ENCODE measurements at regions of chr10 and their contacts with region 1.

Region 1: GRCh38 chr10:68096913-68097503 is 12.3 kb upstream of the MYPN start:
- DNase-seq: peak; percentile 80 to 95
- H3K4me3 ChIP-seq: peak overlapping the region; percentile 2; the same call in 1 of the 2 replicates
- H3K27ac ChIP-seq: peak overlapping the region; percentile 100
- H3K4me1 ChIP-seq: peaks cover 73% of the 10 kb centered on the region
- H3K27me3 ChIP-seq: no peaks in the 10 kb centered on the region
- CTCF ChIP-seq: no peak

Region 2: DNA sequence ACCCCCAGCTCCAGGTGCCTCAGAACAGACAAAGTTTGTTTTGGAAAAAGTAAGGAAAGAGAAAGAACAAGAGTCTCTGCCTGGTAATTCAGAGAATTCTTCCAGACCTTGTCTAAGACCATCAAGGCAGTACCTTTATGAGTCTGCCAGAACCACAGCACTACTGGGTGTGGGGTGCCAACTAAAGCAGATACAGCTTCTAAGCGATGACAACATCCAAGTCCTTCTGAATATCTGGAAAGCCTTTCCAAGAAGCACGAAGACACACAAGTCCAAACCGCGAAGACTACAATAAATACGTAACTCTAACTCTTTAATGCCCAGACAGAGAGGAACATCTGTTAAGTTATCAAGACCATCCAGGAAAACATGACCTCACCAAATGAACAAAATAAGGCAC is 118.3 kb before region 1 on chr10:
- CTCF ChIA-PET with region 1: no interaction called
- POLR2A ChIA-PET with region 1: no interaction called
- intact Hi-C with region 1: no loop called
- DNase-seq: no peak
- H3K4me3 ChIP-seq: no peak overlapping the region
- H3K27ac ChIP-seq: no peak overlapping the region
- H3K4me1 ChIP-seq: peaks cover 20% of the 10 kb centered on the region; the same call in 1 of the 2 replicates
- H3K27me3 ChIP-seq: no peaks in the 10 kb centered on the region
- CTCF ChIP-seq: no peak

Region 3: DNA sequence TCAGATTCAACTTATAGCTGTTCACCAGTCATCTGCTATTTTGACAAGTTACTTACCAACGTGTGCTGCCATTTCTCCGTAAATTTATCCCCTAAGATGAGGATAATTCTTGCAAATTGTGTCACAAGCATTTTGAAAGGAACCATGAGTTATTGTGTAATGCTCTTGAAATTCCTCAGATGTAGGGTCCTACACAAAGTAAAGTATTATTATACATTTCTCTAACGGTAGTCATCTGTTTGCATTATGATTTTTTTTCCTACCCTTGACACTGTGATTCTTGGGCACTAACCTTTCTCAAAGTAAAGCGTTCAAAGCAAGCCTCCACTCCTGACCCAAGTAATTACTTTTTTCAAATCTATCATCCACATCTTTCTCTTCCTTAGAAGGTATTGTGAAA is 30.0 kb before region 1 on chr10:
- CTCF ChIA-PET with region 1: interaction called, 3 read pairs
- POLR2A ChIA-PET with region 1: interaction called, 17 read pairs
- intact Hi-C with region 1: no loop called
- DNase-seq: no peak
- H3K4me3 ChIP-seq: no peak overlapping the region
- H3K27ac ChIP-seq: 0 out of 2 replicates have a peak overlapping the region, but pooled peaks have one; percentile 10
- H3K4me1 ChIP-seq: peaks cover 30% of the 10 kb centered on the region
- H3K27me3 ChIP-seq: no peaks in the 10 kb centered on the region
- CTCF ChIP-seq: no peak

Region 4: GRCh38 chr10:68082872-68083271 is 14.1 kb before region 1 on chr10:
- CTCF ChIA-PET with region 1: interaction called, 10 read pairs
- POLR2A ChIA-PET with region 1: interaction called, 20 read pairs
- intact Hi-C with region 1: no loop called
- DNase-seq: no peak
- H3K4me3 ChIP-seq: no peak overlapping the region
- H3K27ac ChIP-seq: peak overlapping the region; percentile 10; the same call in 1 of the 2 replicates
- H3K4me1 ChIP-seq: peaks cover 53% of the 10 kb centered on the region
- H3K27me3 ChIP-seq: no peaks in the 10 kb centered on the region
- CTCF ChIP-seq: peak; percentile 80

Region 5: DNA sequence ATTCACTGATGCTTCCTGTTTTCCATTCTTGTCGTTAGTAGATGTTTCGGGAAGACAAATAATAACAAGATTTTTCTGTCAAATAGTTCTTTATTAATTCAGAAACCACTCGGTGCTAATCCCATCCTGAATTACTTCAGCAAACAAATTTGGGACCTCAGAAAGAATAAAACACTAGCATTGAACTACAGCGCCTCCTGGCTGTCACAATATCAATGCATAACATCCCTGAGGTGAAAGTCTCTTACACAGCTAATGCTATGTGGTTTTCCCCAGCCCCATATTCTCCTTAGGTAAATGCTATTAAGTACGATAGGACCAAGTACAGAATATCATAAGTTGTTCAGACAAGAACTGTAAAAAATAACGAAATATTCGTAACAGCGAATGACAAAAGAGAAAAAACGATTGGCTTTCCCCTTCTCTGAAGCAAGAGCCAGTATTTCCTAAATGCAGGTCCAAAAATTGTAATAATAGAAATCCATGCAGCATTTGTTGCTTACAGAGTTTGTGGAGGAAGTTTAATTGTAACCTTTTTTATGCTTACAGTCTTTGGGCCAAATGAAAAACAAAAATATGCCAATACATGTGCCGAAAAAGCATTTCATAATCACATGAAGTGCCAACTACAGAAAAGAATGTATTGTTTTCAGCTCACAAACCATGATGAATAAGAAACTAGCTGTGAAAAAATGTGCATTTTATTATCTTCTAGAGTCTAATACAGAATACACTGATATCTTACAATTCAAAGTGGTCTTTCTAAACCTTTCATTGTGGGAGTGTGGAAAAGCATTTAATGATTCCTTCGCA is 59.6 kb after region 1 on chr10:
- CTCF ChIA-PET with region 1: interaction called, 3 read pairs
- POLR2A ChIA-PET with region 1: interaction called, 15 read pairs
- intact Hi-C with region 1: loop called (anchors 1 kb)
- DNase-seq: peak; percentile 36 to 40
- H3K4me3 ChIP-seq: no peak overlapping the region
- H3K27ac ChIP-seq: no peak overlapping the region
- H3K4me1 ChIP-seq: peaks cover 62% of the 10 kb centered on the region
- H3K27me3 ChIP-seq: no peaks in the 10 kb centered on the region
- CTCF ChIP-seq: peak; percentile 76